B cell (primary cell): ENCODE measurements at regions of chr10 and their contacts with region 1.

Region 1: DNA sequence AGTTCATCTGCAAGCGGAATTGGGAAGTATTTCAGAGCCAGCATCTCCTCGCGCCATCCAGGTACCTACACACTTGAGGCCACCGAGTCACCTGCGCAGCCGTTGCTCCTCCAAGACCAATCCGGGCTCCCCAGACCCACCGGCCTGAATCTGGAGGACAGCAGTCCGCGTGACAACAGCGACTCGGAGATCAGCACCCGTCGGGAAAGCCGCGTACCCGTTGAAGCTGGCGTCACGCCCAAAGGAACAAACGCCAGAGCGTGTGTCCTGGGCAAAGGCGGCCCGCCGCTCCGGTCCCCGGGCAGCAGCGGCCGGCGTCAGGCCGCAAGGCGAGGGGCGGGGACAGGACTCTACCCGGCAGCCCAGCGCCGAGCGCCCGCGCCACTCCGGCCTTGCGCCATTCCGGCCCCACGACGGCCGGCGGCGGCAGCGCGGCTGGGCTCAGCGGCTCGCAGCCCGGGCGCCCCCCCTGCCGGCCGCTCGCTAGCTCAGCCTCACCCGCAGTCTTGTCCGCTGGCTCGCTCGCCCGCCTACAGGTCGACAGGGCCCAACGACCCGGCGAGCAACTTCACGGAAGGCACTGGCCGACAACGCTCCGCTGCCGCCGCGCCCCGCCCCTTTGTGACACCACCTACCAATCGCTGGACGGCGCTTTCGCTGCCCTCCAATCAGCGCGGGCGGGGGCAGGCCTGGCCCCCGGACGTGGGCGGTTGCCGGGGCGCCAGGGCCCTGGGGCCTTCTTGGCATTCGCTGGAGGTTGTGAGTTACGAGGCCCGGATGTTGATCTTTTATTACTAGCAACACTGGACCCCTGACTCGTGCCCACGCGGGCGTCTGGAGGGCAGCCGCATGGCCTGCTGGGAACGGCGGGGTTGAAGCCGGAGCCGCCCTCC is at the start of gene ZFAND4:
- DNase-seq: peak; percentile 97
- ATAC-seq: peak; percentile 94
- H3K4me3 ChIP-seq: peak within 1 kb of the TSS; percentile 48 to 85 (median 75)
- H3K4me3 Mint-ChIP-seq: peak within 1 kb of the TSS; percentile 92
- H3K27ac ChIP-seq: peak within 1 kb of the TSS; percentile 85 to 90
- H3K27ac Mint-ChIP-seq: peak within 1 kb of the TSS; percentile 92
- H3K4me1 ChIP-seq: peaks cover 7 to 14% of the 10 kb centered on the region in 2 donors
- H3K4me1 Mint-ChIP-seq: peaks cover 30% of the 10 kb centered on the region
- H3K27me3 ChIP-seq: no peaks in the 10 kb centered on the region
- H3K27me3 Mint-ChIP-seq: no peaks in the 10 kb centered on the region
- CTCF ChIP-seq: peak; percentile 72
- total RNA-seq, gene ZFAND4: 23.4 and 25.1 TPM in 2 replicates

Region 2: DNA sequence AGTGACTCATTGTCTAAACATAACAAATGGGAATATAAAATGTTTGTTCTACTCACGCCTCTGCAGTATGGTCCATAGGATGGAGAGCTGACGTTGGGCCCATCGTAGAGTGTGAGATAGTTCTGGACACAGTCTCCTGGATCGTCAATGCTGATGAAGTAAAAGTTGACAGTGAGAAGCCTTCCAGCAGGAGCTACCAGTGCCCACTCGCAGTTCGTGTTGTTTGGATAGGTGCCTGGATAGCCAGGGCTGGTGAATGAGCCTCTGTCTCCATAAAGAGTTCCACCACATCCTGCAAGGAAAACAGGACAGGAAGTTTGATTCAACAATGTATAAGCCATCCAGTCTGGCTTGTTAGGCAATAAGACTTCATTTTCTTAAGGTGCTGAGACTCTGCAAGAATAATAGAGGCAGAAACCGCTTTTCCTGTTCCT is 436.6 kb before region 1 on chr10:
- CTCF ChIA-PET with region 1: interaction called, 10 read pairs
- POLR2A ChIA-PET with region 1: no interaction called
- intact Hi-C with region 1: no loop called
- DNase-seq: peak; percentile 2
- ATAC-seq: no peak
- H3K4me3 ChIP-seq: no peak overlapping the region
- H3K4me3 Mint-ChIP-seq: no peak overlapping the region
- H3K27ac ChIP-seq: no peak overlapping the region
- H3K27ac Mint-ChIP-seq: no peak overlapping the region
- H3K4me1 ChIP-seq: no peaks in the 10 kb centered on the region
- H3K4me1 Mint-ChIP-seq: no peaks in the 10 kb centered on the region
- H3K27me3 ChIP-seq: no peaks in the 10 kb centered on the region
- H3K27me3 Mint-ChIP-seq: peaks cover 8% of the 10 kb centered on the region
- CTCF ChIP-seq: no peak

Region 3: DNA sequence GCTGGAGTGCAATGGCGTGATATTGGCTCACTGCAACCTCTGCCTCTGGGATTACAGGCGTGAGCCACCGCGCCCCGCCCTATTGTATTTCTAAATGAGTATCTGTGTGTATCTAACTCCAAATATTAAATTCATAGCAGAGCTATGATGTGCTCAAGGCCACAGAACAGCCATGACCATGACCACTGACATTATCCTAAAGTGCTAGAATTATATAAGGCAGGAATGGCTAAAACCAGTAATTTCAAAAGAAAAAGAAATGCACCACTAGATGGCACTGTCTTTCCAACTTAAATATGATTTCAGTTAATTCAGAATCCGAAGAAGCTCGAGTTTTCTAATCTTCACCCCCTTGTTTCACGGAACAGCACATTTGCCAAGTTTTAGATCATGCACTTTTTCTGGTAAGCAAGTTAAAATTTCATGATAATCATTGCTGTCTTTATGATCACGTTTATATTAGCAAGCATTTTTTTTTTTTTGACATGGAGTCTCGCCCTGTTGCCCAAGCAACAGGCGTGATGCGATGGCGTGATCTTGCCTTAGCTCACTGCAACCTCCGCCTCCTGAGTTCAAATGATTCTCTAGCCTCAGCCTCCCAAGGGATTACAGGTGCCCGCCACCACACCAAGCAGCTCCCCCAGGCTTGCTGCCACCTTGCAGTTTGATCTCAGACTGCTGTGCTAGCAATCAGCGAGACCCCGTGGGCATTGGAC is 422.3 kb before region 1 on chr10:
- CTCF ChIA-PET with region 1: interaction called, 27 read pairs
- POLR2A ChIA-PET with region 1: no interaction called
- intact Hi-C with region 1: loop called (anchors 1 kb)
- DNase-seq: peak; percentile 82
- ATAC-seq: peak; percentile 90
- H3K4me3 ChIP-seq: peak overlapping the region in 4 of 5 experiments; percentile 1 to 56 (median 44)
- H3K4me3 Mint-ChIP-seq: peak overlapping the region; percentile 86
- H3K27ac ChIP-seq: peak overlapping the region; percentile 0 to 60
- H3K27ac Mint-ChIP-seq: peak overlapping the region; percentile 82
- H3K4me1 ChIP-seq: peaks cover 15 to 18% of the 10 kb centered on the region in 2 donors
- H3K4me1 Mint-ChIP-seq: peaks cover 26% of the 10 kb centered on the region
- H3K27me3 ChIP-seq: no peaks in the 10 kb centered on the region
- H3K27me3 Mint-ChIP-seq: peaks cover 7% of the 10 kb centered on the region
- CTCF ChIP-seq: peak; percentile 83

Region 4: DNA sequence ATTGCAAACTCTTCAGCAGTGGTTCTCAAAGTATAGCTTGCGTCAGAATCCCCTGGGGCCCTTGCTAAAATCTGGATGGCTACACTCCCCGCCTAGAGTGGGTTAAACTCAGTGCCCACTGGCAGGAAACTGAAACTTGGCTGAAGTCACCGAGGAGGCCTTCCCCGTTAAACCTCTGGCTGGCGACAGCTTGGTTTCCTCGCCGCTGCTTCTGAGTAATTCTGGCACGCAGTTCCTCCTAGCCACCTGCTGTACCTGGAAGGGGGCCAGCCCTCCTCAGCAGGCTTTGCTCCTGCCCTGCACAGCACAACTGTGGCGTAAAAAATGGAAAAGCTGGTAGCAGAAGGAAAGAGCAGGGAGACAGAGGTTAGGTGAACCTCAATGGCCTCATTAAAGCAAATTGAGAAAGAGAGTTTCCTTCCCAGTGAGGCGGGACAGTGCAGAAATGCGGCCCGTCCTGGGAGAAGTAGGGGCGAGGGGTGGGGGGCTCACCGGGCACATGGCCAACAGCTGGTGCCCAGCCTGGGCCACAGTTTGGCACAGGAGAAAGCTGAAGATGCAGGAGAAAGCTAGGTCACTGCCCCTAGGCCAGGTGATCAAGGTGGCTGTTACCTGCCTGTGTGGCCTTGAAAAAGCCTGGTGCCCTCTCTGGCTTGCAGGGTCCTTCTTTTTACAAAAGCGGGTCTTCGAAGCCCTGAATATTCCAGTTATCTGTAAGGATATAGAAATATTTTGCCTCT is 251.8 kb before region 1 on chr10:
- CTCF ChIA-PET with region 1: no interaction called
- POLR2A ChIA-PET with region 1: no interaction called
- intact Hi-C with region 1: loop called (anchors 5 kb)
- DNase-seq: peak; percentile 72
- ATAC-seq: peak; percentile 54
- H3K4me3 ChIP-seq: peak overlapping the region; percentile 15 to 75 (median 32)
- H3K4me3 Mint-ChIP-seq: peak overlapping the region; percentile 97
- H3K27ac ChIP-seq: peak overlapping the region; percentile 84 to 85
- H3K27ac Mint-ChIP-seq: peak overlapping the region; percentile 94
- H3K4me1 ChIP-seq: peaks cover 49 to 60% of the 10 kb centered on the region in 2 donors
- H3K4me1 Mint-ChIP-seq: peaks cover 67% of the 10 kb centered on the region
- H3K27me3 ChIP-seq: no peaks in the 10 kb centered on the region
- H3K27me3 Mint-ChIP-seq: no peaks in the 10 kb centered on the region
- CTCF ChIP-seq: no peak

Region 5: GRCh38 chr10:45580371-45581215 is 91.8 kb before region 1 on chr10:
- CTCF ChIA-PET with region 1: no interaction called
- POLR2A ChIA-PET with region 1: no interaction called
- intact Hi-C with region 1: loop called (anchors 1 kb)
- DNase-seq: peak; percentile 65
- ATAC-seq: peak; percentile 79
- H3K4me3 ChIP-seq: peak overlapping the region; percentile 40 to 79 (median 59)
- H3K4me3 Mint-ChIP-seq: peak overlapping the region; percentile 95
- H3K27ac ChIP-seq: peak overlapping the region; percentile 92 to 93
- H3K27ac Mint-ChIP-seq: peak overlapping the region; percentile 95
- H3K4me1 ChIP-seq: peaks cover 19 to 36% of the 10 kb centered on the region in 2 donors
- H3K4me1 Mint-ChIP-seq: peaks cover 50% of the 10 kb centered on the region
- H3K27me3 ChIP-seq: no peaks in the 10 kb centered on the region
- H3K27me3 Mint-ChIP-seq: no peaks in the 10 kb centered on the region
- CTCF ChIP-seq: no peak

Region 6: GRCh38 chr10:45594276-45595106 is 77.9 kb before region 1 on chr10:
- CTCF ChIA-PET with region 1: interaction called, 6 read pairs
- POLR2A ChIA-PET with region 1: no interaction called
- intact Hi-C with region 1: loop called (anchors 1 kb)
- DNase-seq: peak; percentile 95
- ATAC-seq: peak; percentile 88
- H3K4me3 ChIP-seq: peak overlapping the region; percentile 72 to 86 (median 83)
- H3K4me3 Mint-ChIP-seq: peak overlapping the region; percentile 96
- H3K27ac ChIP-seq: peak overlapping the region; percentile 87 to 88
- H3K27ac Mint-ChIP-seq: peak overlapping the region; percentile 98
- H3K4me1 ChIP-seq: peaks cover 26% of the 10 kb centered on the region in 2 donors
- H3K4me1 Mint-ChIP-seq: peaks cover 38% of the 10 kb centered on the region
- H3K27me3 ChIP-seq: no peaks in the 10 kb centered on the region
- H3K27me3 Mint-ChIP-seq: peaks cover 6% of the 10 kb centered on the region
- CTCF ChIP-seq: no peak

Region 7: GRCh38 chr10:45657033-45657926 is 15.1 kb before region 1 on chr10:
- CTCF ChIA-PET with region 1: interaction called, 6 read pairs
- POLR2A ChIA-PET with region 1: no interaction called
- intact Hi-C with region 1: loop called (anchors 2 kb)
- DNase-seq: no peak
- ATAC-seq: no peak
- H3K4me3 ChIP-seq: no peak overlapping the region
- H3K4me3 Mint-ChIP-seq: no peak overlapping the region
- H3K27ac ChIP-seq: no peak overlapping the region
- H3K27ac Mint-ChIP-seq: peak overlapping the region; percentile 53
- H3K4me1 ChIP-seq: peaks cover 5 to 10% of the 10 kb centered on the region in 2 donors
- H3K4me1 Mint-ChIP-seq: peaks cover 40% of the 10 kb centered on the region
- H3K27me3 ChIP-seq: no peaks in the 10 kb centered on the region
- H3K27me3 Mint-ChIP-seq: no peaks in the 10 kb centered on the region
- CTCF ChIP-seq: no peak